OCI-LY7 (cell line): ENCODE measurements at regions of chr6 and their contacts with region 1.

Region 1: GRCh38 chr6:98384801-98385200 is 449.6 kb upstream of the POU3F2 start:
- DNase-seq: no peak
- H3K4me3 ChIP-seq: no peak overlapping the region
- H3K27ac ChIP-seq: no peak overlapping the region
- H3K4me1 ChIP-seq: no peaks in the 10 kb centered on the region
- CTCF ChIP-seq: no peak

Region 2: GRCh38 chr6:98358173-98358572 is 26.6 kb before region 1 on chr6:
- CTCF ChIA-PET with region 1: no interaction called
- POLR2A ChIA-PET with region 1: interaction called, 10 read pairs
- intact Hi-C with region 1: no loop called
- DNase-seq: no peak
- H3K4me3 ChIP-seq: no peak overlapping the region
- H3K27ac ChIP-seq: no peak overlapping the region
- H3K4me1 ChIP-seq: no peaks in the 10 kb centered on the region
- CTCF ChIP-seq: no peak